Activated CD4-positive, alpha-beta T cell treated with anti-CD3 and anti-CD28 coated beads for 36 hours (primary cell): ENCODE measurements at regions of chr7 and their contacts with region 1.

Region 1: DNA sequence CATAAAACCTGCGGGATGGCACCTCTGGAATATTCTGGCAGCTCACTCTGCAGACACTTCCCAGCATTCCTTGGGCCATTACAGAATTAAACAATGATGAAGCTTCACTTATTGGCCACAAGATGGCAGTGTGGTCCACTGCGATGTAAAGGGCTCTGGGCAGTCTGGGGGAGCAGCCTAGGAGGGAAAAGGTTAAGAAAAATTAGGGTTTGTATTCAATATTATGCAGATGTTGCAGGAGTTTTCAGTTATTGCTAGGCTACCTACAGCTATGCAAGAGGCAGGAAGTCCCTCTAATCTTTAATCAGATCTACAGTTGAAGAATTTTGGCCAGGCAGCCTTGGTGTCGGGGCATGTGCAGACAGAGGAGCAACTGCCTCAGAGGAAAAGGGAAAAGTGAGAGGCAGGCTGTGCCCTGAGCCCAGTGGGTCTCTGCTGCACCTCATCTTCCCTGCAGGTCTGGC is 233.2 kb upstream of the PRSS1 start:
- DNase-seq: peak; percentile 59
- ATAC-seq: peak; percentile 82
- H3K4me3 Mint-ChIP-seq: no peak overlapping the region
- H3K27ac Mint-ChIP-seq: no peak overlapping the region
- H3K4me1 Mint-ChIP-seq: peaks cover 48% of the 10 kb centered on the region
- H3K27me3 Mint-ChIP-seq: no peaks in the 10 kb centered on the region

Region 2: DNA sequence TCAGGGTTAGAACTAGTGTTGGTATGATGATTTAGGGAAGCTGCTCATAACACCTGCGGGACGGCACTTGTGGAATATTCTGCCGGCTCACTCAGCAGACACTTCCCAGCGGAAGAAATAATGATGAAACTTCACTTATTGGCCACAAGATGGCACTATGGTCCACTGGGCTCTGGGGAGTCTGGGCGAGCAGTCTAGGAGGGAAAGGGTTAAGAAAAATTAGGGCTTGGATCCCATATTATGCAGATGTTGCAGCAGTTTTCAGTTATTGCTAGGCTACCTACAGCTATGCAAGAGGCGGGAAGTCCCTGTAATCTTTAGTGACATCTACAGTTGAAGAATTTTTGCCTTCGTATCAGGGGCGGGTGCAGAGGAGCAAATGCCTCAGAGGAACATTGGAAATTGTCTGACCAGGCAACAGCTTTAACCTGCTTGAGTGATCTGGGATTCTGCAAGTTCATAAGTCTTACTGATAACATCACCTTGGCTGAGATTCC is 19.5 kb before region 1 on chr7:
- CTCF ChIA-PET with region 1: interaction called, 26 read pairs
- POLR2A ChIA-PET with region 1: no interaction called
- intact Hi-C with region 1: loop called in 1 of 2 experiments (anchors 2 kb)
- DNase-seq: peak; percentile 50
- ATAC-seq: peak; percentile 27
- H3K4me3 Mint-ChIP-seq: peak overlapping the region; percentile 36
- H3K27ac Mint-ChIP-seq: peak overlapping the region; percentile 49
- H3K4me1 Mint-ChIP-seq: peaks cover 50% of the 10 kb centered on the region
- H3K27me3 Mint-ChIP-seq: no peaks in the 10 kb centered on the region